Activated CD8-positive, alpha-beta memory T cell treated with anti-CD3 and anti-CD28 coated beads, Interleukin-2, amount 10 ng/mL, durations not matched to agents 7 days and 5 days (primary cell): ENCODE measurements at regions of chr19 and their contacts with region 1.

Region 1: GRCh38 chr19:35509861-35510625 is 3.4 kb downstream of the DMKN start:
- DNase-seq: peak; percentile 75
- ATAC-seq: peak; percentile 78
- H3K4me3 Mint-ChIP-seq: peak overlapping the region; percentile 22
- H3K27ac Mint-ChIP-seq: no peak overlapping the region
- H3K4me1 Mint-ChIP-seq: peaks cover 14% of the 10 kb centered on the region
- H3K27me3 Mint-ChIP-seq: peaks cover 59% of the 10 kb centered on the region

Region 2: GRCh38 chr19:35592226-35592625 is 82.2 kb after region 1 on chr19:
- CTCF ChIA-PET with region 1: interaction called, 21 read pairs
- DNase-seq: no peak
- ATAC-seq: no peak
- H3K4me3 Mint-ChIP-seq: no peak overlapping the region
- H3K27ac Mint-ChIP-seq: no peak overlapping the region
- H3K4me1 Mint-ChIP-seq: peaks cover 7% of the 10 kb centered on the region
- H3K27me3 Mint-ChIP-seq: peaks cover 5% of the 10 kb centered on the region

Region 3: GRCh38 chr19:35757749-35758608 is 247.9 kb after region 1 on chr19 and contains the start of gene PROSER3:
- CTCF ChIA-PET with region 1: no interaction called
- DNase-seq: peak; percentile 100
- ATAC-seq: peak; percentile 98
- H3K4me3 Mint-ChIP-seq: peak within 1 kb of the TSS; percentile 89
- H3K27ac Mint-ChIP-seq: peak within 1 kb of the TSS; percentile 94
- H3K4me1 Mint-ChIP-seq: peaks cover 29% of the 10 kb centered on the region
- H3K27me3 Mint-ChIP-seq: no peaks in the 10 kb centered on the region
- total RNA-seq, gene PROSER3: 46.5 to 57.8 TPM